ENCODE measurements at regions of chr12 and their contacts with region 1.

Region 1: DNA sequence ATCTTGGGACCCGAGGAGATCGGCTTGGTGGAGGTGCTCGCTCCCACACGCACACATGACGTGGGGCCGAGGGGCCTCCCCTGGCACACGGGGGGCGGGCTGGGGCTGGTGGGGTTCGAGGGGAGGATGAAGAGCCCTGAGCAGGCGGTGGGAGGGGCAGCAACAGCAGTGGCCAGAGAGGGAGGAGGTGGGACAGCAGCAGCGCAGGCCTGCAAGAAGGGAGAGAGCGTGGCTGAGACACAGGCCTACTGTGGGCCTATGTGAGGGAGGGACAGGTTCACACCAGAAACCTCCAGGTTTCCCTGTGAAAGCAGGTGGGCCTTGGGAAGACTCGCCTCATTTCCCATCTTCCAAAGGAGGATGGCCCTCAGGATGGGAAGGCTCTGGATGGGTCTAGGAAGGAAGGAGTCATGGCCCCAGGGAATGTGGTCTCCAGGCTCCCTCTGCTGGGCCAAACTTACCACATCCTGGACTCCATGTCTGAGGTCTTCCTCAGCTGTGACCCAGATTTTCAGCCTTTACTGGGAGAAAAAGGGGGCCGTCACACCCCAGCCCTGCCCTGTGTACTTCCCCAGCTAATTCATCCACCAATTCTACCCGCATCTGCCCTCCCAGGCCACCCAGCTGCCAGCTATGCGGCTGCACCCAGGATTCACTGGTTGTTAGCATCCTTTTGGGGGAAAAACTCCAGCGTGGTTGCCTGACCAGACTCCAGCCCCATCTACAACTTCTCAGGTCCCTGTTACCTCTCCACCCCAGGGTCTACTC is 2.8 kb downstream of the PIANP start:
- DNase-seq: peak; percentile 43 to 68
- H3K4me3 ChIP-seq: no peak overlapping the region
- H3K27ac ChIP-seq: no peak overlapping the region
- H3K4me1 ChIP-seq: no peaks in the 10 kb centered on the region
- H3K27me3 ChIP-seq: peaks cover 43% of the 10 kb centered on the region
- CTCF ChIP-seq: peak; percentile 74

Region 2: GRCh38 chr12:6592087-6592486 is 105.7 kb before region 1 on chr12:
- CTCF ChIA-PET with region 1: interaction called, 15 read pairs
- POLR2A ChIA-PET with region 1: no interaction called
- intact Hi-C with region 1: no loop called
- DNase-seq: peak in 1 of 2 experiments; percentile 4
- H3K4me3 ChIP-seq: no peak overlapping the region
- H3K27ac ChIP-seq: no peak overlapping the region
- H3K4me1 ChIP-seq: no peaks in the 10 kb centered on the region
- H3K27me3 ChIP-seq: no peaks in the 10 kb centered on the region
- CTCF ChIP-seq: no peak

Measured in PC-9 (cell line).